ENCODE measurements at regions of chr16 and their contacts with region 1.

Region 1: GRCh38 chr16:56356276-56357240 is 68.8 kb downstream of the AMFR start:
- DNase-seq: peak; percentile 74
- H3K4me3 Mint-ChIP-seq: peak overlapping the region; percentile 73
- H3K27ac Mint-ChIP-seq: peak overlapping the region; percentile 89
- H3K4me1 Mint-ChIP-seq: peaks cover 23% of the 10 kb centered on the region
- H3K27me3 Mint-ChIP-seq: no peaks in the 10 kb centered on the region

Region 2: DNA sequence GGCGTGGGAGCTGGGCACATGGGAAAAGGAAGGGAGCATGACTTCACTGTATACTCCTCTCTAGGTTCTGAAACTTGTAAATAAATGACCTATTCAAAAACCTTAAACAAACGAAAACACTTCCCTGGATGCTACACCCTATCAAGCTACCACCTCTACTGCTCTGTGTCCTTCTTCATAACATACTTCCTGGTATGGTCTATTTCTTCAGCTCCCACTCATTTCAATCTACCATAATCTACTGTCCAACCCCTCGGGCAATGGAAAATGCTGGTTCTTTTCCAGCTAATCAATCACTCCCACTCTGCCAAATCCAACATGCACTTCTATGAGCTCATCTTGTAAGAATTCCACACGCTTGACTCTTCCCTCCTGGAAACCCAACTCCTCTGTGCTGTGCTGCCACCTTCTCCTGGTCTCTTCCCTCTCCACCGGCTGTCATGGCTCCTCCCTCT is 26.4 kb after region 1 on chr16:
- CTCF ChIA-PET with region 1: no interaction called
- POLR2A ChIA-PET with region 1: no interaction called
- intact Hi-C with region 1: no loop called
- DNase-seq: no peak
- H3K4me3 Mint-ChIP-seq: no peak overlapping the region
- H3K27ac Mint-ChIP-seq: no peak overlapping the region
- H3K4me1 Mint-ChIP-seq: no peaks in the 10 kb centered on the region
- H3K27me3 Mint-ChIP-seq: no peaks in the 10 kb centered on the region

Region 3: GRCh38 chr16:56425439-56425832 is 68.9 kb after region 1 on chr16 and contains the start of gene AMFR:
- CTCF ChIA-PET with region 1: interaction called, 3 read pairs
- POLR2A ChIA-PET with region 1: interaction called, 4 read pairs
- intact Hi-C with region 1: loop called (anchors 1 kb)
- DNase-seq: peak; percentile 65
- H3K4me3 Mint-ChIP-seq: peak within 1 kb of the TSS; percentile 89
- H3K27ac Mint-ChIP-seq: peak within 1 kb of the TSS; percentile 46
- H3K4me1 Mint-ChIP-seq: peaks cover 58% of the 10 kb centered on the region
- H3K27me3 Mint-ChIP-seq: no peaks in the 10 kb centered on the region
- total RNA-seq, gene AMFR: 42.0 to 45.4 TPM